Activated T-helper 1 cell treated with anti-CD3 and anti-CD28 coated beads, Interleukin-12 subunit alpha, Interleukin-12 subunit beta, Interleukin-2, Interleukin-4 antibody, amounts not matched to agents 30 ng/mL and 10 ng/mL and 1 ng/mL, durations not matched to agents 14 hours and 24 hours and 36 hours (primary cell): ENCODE measurements at regions of chr3 and their contacts with region 1.

Region 1: GRCh38 chr3:72426618-72427397 is 421.4 kb downstream of the SHQ1 start:
- DNase-seq: no peak
- H3K4me3 Mint-ChIP-seq: peak overlapping the region; percentile 69
- H3K27ac Mint-ChIP-seq: peak overlapping the region; percentile 97
- H3K4me1 Mint-ChIP-seq: peaks cover 62% of the 10 kb centered on the region
- H3K27me3 Mint-ChIP-seq: no peaks in the 10 kb centered on the region

Region 2: GRCh38 chr3:71875461-71875947 is 551.3 kb before region 1 on chr3:
- intact Hi-C with region 1: loop called (anchors 5 kb)
- DNase-seq: peak; percentile 67
- H3K4me3 Mint-ChIP-seq: no peak overlapping the region
- H3K27ac Mint-ChIP-seq: peak overlapping the region; percentile 59
- H3K4me1 Mint-ChIP-seq: peaks cover 38% of the 10 kb centered on the region
- H3K27me3 Mint-ChIP-seq: peaks cover 8% of the 10 kb centered on the region

Region 3: GRCh38 chr3:72339116-72340030 is 87.4 kb before region 1 on chr3:
- intact Hi-C with region 1: loop called (anchors 1 kb)
- DNase-seq: no peak
- H3K4me3 Mint-ChIP-seq: no peak overlapping the region
- H3K27ac Mint-ChIP-seq: no peak overlapping the region
- H3K4me1 Mint-ChIP-seq: peaks cover 32% of the 10 kb centered on the region
- H3K27me3 Mint-ChIP-seq: peaks cover under 1% of the 10 kb centered on the region

Region 4: DNA sequence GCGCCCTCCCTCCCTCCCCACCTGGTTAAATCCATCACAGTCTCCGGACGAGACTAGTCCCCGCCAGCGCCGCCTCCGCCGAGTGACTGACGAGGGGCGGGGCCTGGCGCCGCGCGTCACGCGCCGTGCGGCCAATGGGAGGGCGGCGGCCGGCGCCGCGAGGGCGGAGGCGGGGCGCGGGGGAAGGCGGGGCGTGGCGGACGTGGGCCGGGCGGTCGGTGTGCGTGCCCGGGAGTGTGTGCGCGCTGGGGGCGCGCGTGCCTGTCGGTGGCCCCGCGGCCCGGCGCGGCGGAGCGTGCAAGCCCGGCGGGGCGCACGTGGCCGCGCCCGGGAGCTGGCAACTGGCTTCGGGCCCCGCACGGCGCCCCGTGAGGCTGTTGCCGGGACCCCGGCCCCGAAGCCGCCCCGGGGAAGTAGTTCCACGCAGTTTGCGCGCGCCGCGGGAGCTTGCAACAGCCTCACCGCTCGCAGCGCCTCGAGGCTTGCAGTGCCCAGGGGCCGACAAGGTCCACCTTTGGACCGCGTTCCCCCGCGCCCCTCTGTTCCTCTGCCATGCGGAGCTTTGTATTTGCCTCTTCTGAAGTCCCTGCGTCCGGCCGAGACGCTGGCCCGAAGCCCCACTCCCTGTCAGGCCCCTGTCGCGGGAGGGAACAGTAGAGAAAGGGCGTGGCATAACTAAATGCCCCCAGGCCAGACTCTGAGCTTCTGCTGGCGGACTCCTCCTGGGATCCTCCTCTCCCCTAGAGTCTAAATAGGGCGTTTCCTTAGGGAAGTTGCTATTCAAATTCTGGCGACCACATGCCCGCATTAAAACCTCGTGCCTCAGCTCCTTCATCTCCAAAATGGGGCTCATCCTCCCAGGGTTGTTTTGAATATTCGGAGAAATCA is 20.5 kb after region 1 on chr3:
- intact Hi-C with region 1: loop called (anchors 1 kb)
- DNase-seq: peak; percentile 93
- H3K4me3 Mint-ChIP-seq: peak overlapping the region; percentile 71
- H3K27ac Mint-ChIP-seq: peak overlapping the region; percentile 80
- H3K4me1 Mint-ChIP-seq: peaks cover 50% of the 10 kb centered on the region
- H3K27me3 Mint-ChIP-seq: peaks cover 1% of the 10 kb centered on the region

Region 5: DNA sequence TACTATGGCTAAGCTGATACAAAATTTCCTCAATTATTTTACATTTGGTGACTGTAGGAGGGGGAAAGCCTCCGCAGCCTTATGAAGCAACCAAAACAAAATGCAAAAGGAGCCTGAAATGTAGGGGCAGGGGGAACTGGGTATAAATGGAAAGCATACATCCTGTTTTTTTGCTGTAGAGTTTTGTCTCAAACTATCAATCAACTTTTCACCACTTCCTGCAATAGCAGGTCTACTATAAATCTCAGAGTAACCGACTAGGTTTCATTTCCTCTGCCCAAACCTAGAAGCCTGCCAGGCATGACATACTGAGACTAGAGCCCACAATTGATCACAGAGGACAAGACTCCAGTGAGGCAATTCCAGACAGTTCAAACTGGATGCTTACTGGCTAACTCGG is 330.1 kb after region 1 on chr3:
- intact Hi-C with region 1: loop called (anchors 5 kb)
- DNase-seq: peak; percentile 38
- H3K4me3 Mint-ChIP-seq: peak overlapping the region; percentile 34
- H3K27ac Mint-ChIP-seq: peak overlapping the region; percentile 64
- H3K4me1 Mint-ChIP-seq: peaks cover 50% of the 10 kb centered on the region
- H3K27me3 Mint-ChIP-seq: no peaks in the 10 kb centered on the region